Breast epithelium (tissue), 4 donors: ENCODE measurements at regions of chr18 and their contacts with region 1.

Region 1: GRCh38 chr18:3885209-3885792 is 435.3 kb downstream of the TGIF1 start:
- DNase-seq: no peak
- H3K4me3 ChIP-seq: no peak overlapping the region
- H3K27ac ChIP-seq: no peak overlapping the region
- H3K4me1 ChIP-seq: no peaks in the 10 kb centered on the region
- H3K27me3 ChIP-seq: no peaks in the 10 kb centered on the region
- CTCF ChIP-seq: no peak
- POLR2A ChIP-seq: no peak

Region 2: DNA sequence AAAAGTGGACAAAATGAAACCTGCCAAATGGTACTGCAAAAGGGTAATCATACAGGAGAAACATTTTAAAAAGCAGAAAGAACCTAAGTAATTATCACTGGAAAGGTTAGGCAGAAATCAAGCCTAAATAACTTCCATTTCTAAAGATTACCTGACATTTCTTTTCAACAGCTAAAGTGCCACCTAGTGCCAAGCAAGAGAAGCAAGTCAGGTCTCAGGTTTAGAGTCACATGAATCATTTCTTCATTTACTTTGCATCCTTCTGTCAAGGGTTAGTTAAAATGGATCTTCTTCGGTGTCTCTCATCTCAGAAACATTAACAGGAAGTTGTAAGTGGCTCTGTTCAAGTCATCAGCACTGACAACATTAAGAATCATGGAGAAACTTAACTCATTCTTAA is 1221.4 kb after region 1 on chr18:
- intact Hi-C with region 1: loop called (anchors 10 kb)
- DNase-seq: no peak
- H3K4me3 ChIP-seq: no peak overlapping the region
- H3K27ac ChIP-seq: no peak overlapping the region
- H3K4me1 ChIP-seq: no peaks in the 10 kb centered on the region
- H3K27me3 ChIP-seq: no peaks in the 10 kb centered on the region
- CTCF ChIP-seq: no peak
- POLR2A ChIP-seq: no peak